Dorsolateral prefrontal cortex (tissue), 120 donors: ENCODE measurements at regions of chr1 and their contacts with region 1.

Region 1: GRCh38 chr1:28736450-28737306 is at the start of gene YTHDF2:
- DNase-seq: peak; percentile 91 to 96 (median 94)
- H3K4me3 ChIP-seq: peak within 1 kb of the TSS; percentile 68 to 100 (median 95)
- H3K27ac ChIP-seq: peak within 1 kb of the TSS; percentile 65 to 97 (median 92)
- H3K27me3 ChIP-seq: no peaks in the 10 kb centered on the region
- CTCF ChIP-seq: peak; percentile 88 to 100 (median 98)
- total RNA-seq, gene YTHDF2: 23.5 to 67.2 (median 47.9) TPM

Region 2: GRCh38 chr1:27915082-27915598 is 821.5 kb before region 1 on chr1:
- intact Hi-C with region 1: no loop called
- DNase-seq: no peak
- H3K4me3 ChIP-seq: peak overlapping the region; percentile 70 to 100 (median 89)
- H3K27ac ChIP-seq: peak overlapping the region in 57 of 59 donors; percentile 19 to 93 (median 79)
- H3K27me3 ChIP-seq: no peaks in the 10 kb centered on the region
- CTCF ChIP-seq: no peak

Region 3: DNA sequence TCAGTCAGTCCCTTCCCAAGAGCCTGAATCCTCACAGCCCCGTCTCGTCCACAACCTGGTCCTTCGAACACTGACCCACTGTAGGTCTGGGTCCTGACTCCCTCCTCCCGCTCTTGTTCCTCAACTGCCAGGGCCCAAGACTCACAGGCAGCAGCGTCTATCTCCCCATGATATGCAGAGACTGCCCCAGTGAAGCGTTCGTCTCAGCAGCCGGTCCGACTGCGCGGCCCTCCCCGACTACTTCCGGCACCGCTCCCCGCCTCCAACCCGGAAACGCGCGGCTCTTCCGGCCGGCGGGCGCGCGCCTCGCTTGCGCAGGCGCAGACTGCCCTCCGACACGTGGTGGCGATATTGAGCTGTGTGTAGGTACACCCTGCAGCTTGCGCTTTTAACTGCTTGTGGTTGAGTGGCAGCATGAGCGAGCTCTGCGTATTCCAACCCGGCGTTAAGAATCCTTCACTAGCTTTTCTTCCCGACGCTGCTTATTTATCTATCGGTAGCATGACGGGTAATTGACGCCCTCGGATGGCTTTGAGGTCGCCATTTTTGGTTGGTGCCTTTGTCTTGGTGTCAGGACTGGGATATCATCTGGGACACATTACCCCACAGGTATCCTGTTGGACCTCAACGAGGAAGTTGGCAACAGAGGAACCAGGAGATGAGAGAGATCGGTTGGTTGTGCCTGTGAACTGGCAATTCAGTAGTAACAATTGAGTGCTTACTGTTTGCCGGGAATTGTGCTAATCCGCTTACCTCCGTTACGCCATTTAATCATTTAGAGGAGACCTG is 93.6 kb before region 1 on chr1 and contains the start of gene TAF12:
- intact Hi-C with region 1: loop called (anchors 1 to 2 kb)
- DNase-seq: peak; percentile 80 to 92 (median 86)
- H3K4me3 ChIP-seq: peak within 1 kb of the TSS; percentile 57 to 98 (median 84)
- H3K27ac ChIP-seq: peak within 1 kb of the TSS; percentile 52 to 95 (median 90)
- H3K27me3 ChIP-seq: no peaks in the 10 kb centered on the region
- CTCF ChIP-seq: peak in 55 of 56 donors; percentile 29 to 87 (median 62)
- total RNA-seq, gene TAF12: 10.2 to 23.1 (median 15.5) TPM

Region 4: GRCh38 chr1:28668191-28668955 is 68.3 kb before region 1 on chr1 and contains the start of gene GMEB1:
- intact Hi-C with region 1: loop called (anchors 2 kb)
- DNase-seq: peak; percentile 68 to 89 (median 77)
- H3K4me3 ChIP-seq: peak within 1 kb of the TSS; percentile 67 to 100 (median 93)
- H3K27ac ChIP-seq: peak within 1 kb of the TSS; percentile 92 to 100 (median 98)
- H3K27me3 ChIP-seq: no peaks in the 10 kb centered on the region
- CTCF ChIP-seq: peak in 22 of 56 donors; percentile 6 to 45 (median 24)
- total RNA-seq, gene GMEB1: 7.1 to 15.1 (median 10.6) TPM

Region 5: GRCh38 chr1:29181413-29182225 is 444.9 kb after region 1 on chr1 and contains the start of gene SRSF4:
- intact Hi-C with region 1: loop called in 1 of 2 experiments (anchors 5 kb)
- DNase-seq: peak; percentile 95 to 99 (median 98)
- H3K4me3 ChIP-seq: peak within 1 kb of the TSS; percentile 66 to 100 (median 95)
- H3K27ac ChIP-seq: peak within 1 kb of the TSS; percentile 87 to 100 (median 99)
- H3K27me3 ChIP-seq: no peaks in the 10 kb centered on the region
- CTCF ChIP-seq: peak; percentile 66 to 94 (median 83)
- total RNA-seq, gene SRSF4: 52.7 to 84.2 (median 65.8) TPM